Colonic mucosa (tissue), 4 donors: ENCODE measurements at regions of chr18 and their contacts with region 1.

Region 1: GRCh38 chr18:63603772-63604171 is 16.6 kb downstream of the SERPINB13 start:
- DNase-seq: no peak
- H3K4me3 ChIP-seq: no peak overlapping the region
- H3K27ac ChIP-seq: no peak overlapping the region
- H3K4me1 ChIP-seq: no peaks in the 10 kb centered on the region
- H3K27me3 ChIP-seq: no peaks in the 10 kb centered on the region
- CTCF ChIP-seq: no peak

Region 2: DNA sequence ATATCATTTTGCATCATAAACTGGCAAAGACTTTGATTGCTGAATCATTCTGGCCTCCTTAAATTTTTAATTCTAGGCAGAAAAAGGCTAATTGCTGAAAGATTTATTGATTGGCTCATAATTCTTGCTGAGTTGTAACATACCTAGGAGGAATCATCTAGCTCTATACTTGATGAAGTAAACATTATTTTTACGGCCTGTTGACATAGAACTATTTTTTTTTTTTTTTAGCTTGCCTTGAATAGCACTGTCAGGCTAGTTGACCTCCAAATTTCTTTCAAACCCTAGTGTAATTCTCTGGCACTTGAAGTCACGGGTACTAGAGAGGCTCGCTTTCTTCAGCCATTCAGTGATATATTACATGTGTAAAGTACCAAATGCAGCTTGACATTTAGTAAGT is 58.8 kb before region 1 on chr18:
- intact Hi-C with region 1: no loop called
- DNase-seq: no peak
- H3K4me3 ChIP-seq: no peak overlapping the region
- H3K27ac ChIP-seq: no peak overlapping the region
- H3K4me1 ChIP-seq: no peaks in the 10 kb centered on the region
- H3K27me3 ChIP-seq: no peaks in the 10 kb centered on the region
- CTCF ChIP-seq: no peak

Region 3: GRCh38 chr18:63808125-63808524 is 204.4 kb after region 1 on chr18:
- intact Hi-C with region 1: loop called (anchors 10 kb)
- DNase-seq: no peak
- H3K4me3 ChIP-seq: no peak overlapping the region
- H3K27ac ChIP-seq: no peak overlapping the region
- H3K4me1 ChIP-seq: no peaks in the 10 kb centered on the region
- H3K27me3 ChIP-seq: no peaks in the 10 kb centered on the region
- CTCF ChIP-seq: no peak